ENCODE measurements at regions of chr6 and their contacts with region 1.

Region 1: DNA sequence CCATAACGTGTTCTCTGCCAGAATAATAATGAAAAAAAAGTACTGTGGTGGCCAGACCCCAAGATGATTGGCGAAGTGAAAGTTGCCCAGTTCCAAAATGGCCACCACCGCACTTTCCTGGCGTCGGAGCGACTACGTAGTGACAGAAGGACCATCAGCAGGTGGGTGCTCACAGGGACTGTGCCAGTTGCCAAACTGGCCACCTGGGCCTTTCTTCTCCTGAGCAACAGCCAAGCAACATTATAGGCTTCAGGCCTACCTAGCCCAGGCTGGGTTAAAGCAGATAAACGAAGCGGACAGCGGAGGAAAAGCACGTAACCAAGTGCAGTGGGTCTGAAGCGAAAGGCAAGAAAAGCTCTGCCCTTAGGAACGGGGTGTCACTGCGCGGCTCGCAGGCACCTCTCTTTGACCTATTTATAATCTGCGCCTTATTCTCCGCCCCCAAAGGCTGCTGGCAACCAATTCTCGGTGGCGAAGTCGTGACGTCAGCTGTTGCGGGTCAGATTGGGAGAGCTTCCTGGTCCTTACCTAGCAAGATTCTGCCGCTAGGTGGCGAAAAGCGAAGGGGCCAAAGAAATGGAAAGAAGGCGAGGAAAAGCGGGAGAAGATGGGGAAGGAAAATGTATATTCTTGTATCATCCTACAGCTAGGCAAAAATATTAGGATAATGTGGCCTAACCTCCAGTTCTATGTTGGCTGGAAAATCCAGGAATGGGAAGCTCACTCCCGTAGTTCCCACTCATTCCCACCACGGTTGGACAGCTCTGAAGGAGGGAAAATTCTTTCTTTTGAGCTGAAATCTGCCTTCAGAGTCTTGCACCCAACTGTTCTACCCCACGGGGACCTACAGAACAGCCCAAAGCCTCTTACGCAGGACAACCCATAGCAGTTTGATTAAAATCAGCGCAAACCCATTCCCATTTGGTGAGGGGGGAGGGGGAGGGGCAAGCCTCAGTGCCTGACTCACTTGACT is 6.9 kb upstream of the MOG start:
- DNase-seq: peak; percentile 99
- H3K4me3 Mint-ChIP-seq: peak overlapping the region; percentile 88
- H3K27ac Mint-ChIP-seq: peak overlapping the region; percentile 97
- H3K4me1 Mint-ChIP-seq: peaks cover 7% of the 10 kb centered on the region
- H3K27me3 Mint-ChIP-seq: no peaks in the 10 kb centered on the region
- CTCF ChIP-seq: peak; percentile 72

Region 2: GRCh38 chr6:27871924-27872638 is 1777.9 kb before region 1 on chr6:
- CTCF ChIA-PET with region 1: no interaction called
- POLR2A ChIA-PET with region 1: no interaction called
- intact Hi-C with region 1: no loop called
- DNase-seq: peak; percentile 89
- H3K4me3 Mint-ChIP-seq: peak overlapping the region; percentile 79
- H3K27ac Mint-ChIP-seq: peak overlapping the region; percentile 93
- H3K4me1 Mint-ChIP-seq: peaks cover 2% of the 10 kb centered on the region
- H3K27me3 Mint-ChIP-seq: no peaks in the 10 kb centered on the region
- CTCF ChIP-seq: no peak

Region 3: DNA sequence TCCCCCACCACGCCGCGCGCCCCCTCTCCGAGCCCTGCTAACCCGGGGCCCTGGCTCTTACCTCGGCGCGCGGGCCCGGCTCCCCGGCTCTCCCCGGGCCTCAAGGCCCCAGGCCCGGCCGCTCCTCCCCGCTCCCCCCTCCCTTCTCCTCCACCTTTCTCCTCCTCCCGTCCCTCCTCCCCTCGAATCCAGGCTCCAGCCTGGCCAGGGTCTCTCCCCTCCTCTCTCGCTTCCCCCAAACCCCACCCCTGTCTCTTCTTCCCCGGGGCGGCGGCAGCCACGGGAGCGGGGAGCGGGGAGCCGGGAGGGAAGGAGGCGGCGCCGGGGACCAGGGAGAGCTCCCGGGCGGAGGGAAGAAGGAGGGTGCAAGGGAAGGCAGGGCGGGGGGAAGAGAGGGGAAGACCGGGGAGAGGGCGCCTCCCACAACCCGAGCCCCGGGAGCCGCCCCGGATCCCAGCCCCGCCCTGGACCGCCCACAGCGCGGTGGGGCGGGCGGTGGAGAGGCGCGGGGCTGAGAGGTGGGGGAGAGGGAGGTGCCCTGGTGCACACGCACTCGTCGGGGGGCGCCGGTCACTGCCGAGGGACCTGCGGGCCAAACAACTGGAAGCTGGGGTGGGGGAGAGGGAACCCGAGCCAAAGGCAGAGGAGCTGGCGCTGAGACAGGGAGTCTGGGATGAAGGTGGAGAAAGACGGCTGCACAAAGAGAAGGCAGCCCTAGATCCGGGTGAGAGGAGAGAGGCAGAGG is 17.0 kb before region 1 on chr6 and contains the start of gene GABBR1:
- CTCF ChIA-PET with region 1: interaction called, 14 read pairs
- POLR2A ChIA-PET with region 1: interaction called, 13 read pairs
- intact Hi-C with region 1: no loop called
- DNase-seq: peak; percentile 89
- H3K4me3 Mint-ChIP-seq: peak within 1 kb of the TSS; percentile 75
- H3K27ac Mint-ChIP-seq: peak within 1 kb of the TSS; percentile 2
- H3K4me1 Mint-ChIP-seq: peaks cover 33% of the 10 kb centered on the region
- H3K27me3 Mint-ChIP-seq: no peaks in the 10 kb centered on the region
- CTCF ChIP-seq: no peak
- total RNA-seq, gene GABBR1: 38.8 and 43.9 TPM in 2 replicates

Region 4: GRCh38 chr6:29665942-29666825 is 16.2 kb after region 1 on chr6:
- CTCF ChIA-PET with region 1: interaction called, 256 read pairs
- POLR2A ChIA-PET with region 1: interaction called, 11 read pairs
- intact Hi-C with region 1: no loop called
- DNase-seq: no peak
- H3K4me3 Mint-ChIP-seq: no peak overlapping the region
- H3K27ac Mint-ChIP-seq: no peak overlapping the region
- H3K4me1 Mint-ChIP-seq: no peaks in the 10 kb centered on the region
- H3K27me3 Mint-ChIP-seq: no peaks in the 10 kb centered on the region
- CTCF ChIP-seq: no peak

Region 5: GRCh38 chr6:29685718-29686326 is 35.8 kb after region 1 on chr6:
- CTCF ChIA-PET with region 1: interaction called, 29 read pairs
- POLR2A ChIA-PET with region 1: interaction called, 8 read pairs
- intact Hi-C with region 1: loop called (anchors 1 kb)
- DNase-seq: peak; percentile 64
- H3K4me3 Mint-ChIP-seq: no peak overlapping the region
- H3K27ac Mint-ChIP-seq: no peak overlapping the region
- H3K4me1 Mint-ChIP-seq: no peaks in the 10 kb centered on the region
- H3K27me3 Mint-ChIP-seq: no peaks in the 10 kb centered on the region
- CTCF ChIP-seq: peak; percentile 53

Region 6: GRCh38 chr6:29705389-29706231 is 55.6 kb after region 1 on chr6:
- CTCF ChIA-PET with region 1: interaction called, 22 read pairs
- POLR2A ChIA-PET with region 1: no interaction called
- intact Hi-C with region 1: no loop called
- DNase-seq: peak; percentile 72
- H3K4me3 Mint-ChIP-seq: no peak overlapping the region
- H3K27ac Mint-ChIP-seq: no peak overlapping the region
- H3K4me1 Mint-ChIP-seq: peaks cover 6% of the 10 kb centered on the region
- H3K27me3 Mint-ChIP-seq: peaks cover 15% of the 10 kb centered on the region
- CTCF ChIP-seq: peak; percentile 56

Region 7: GRCh38 chr6:29834564-29835436 is 184.8 kb after region 1 on chr6:
- CTCF ChIA-PET with region 1: interaction called, 13 read pairs
- POLR2A ChIA-PET with region 1: no interaction called
- intact Hi-C with region 1: no loop called
- DNase-seq: peak; percentile 42
- H3K4me3 Mint-ChIP-seq: no peak overlapping the region
- H3K27ac Mint-ChIP-seq: no peak overlapping the region
- H3K4me1 Mint-ChIP-seq: peaks cover 6% of the 10 kb centered on the region
- H3K27me3 Mint-ChIP-seq: peaks cover 45% of the 10 kb centered on the region
- CTCF ChIP-seq: peak; percentile 91

Measured in MCF 10A (cell line).